Activated CD8-positive, alpha-beta T cell treated with anti-CD3 and anti-CD28 coated beads, Interleukin-2, amount 10 ng/mL, durations not matched to agents 7 days and 5 days (primary cell): ENCODE measurements at regions of chr6 and their contacts with region 1.

Region 1: GRCh38 chr6:106608062-106608668 is 21.1 kb downstream of the RTN4IP1 start:
- DNase-seq: peak; percentile 55
- ATAC-seq: peak; percentile 77
- H3K4me3 Mint-ChIP-seq: no peak overlapping the region
- H3K27ac Mint-ChIP-seq: no peak overlapping the region
- H3K4me1 Mint-ChIP-seq: peaks cover 12% of the 10 kb centered on the region
- H3K27me3 Mint-ChIP-seq: no peaks in the 10 kb centered on the region

Region 2: GRCh38 chr6:106620931-106621672 is 12.9 kb after region 1 on chr6:
- CTCF ChIA-PET with region 1: interaction called, 50 read pairs
- POLR2A ChIA-PET with region 1: no interaction called
- DNase-seq: no peak
- ATAC-seq: no peak
- H3K4me3 Mint-ChIP-seq: no peak overlapping the region
- H3K27ac Mint-ChIP-seq: no peak overlapping the region
- H3K4me1 Mint-ChIP-seq: peaks cover 16% of the 10 kb centered on the region
- H3K27me3 Mint-ChIP-seq: no peaks in the 10 kb centered on the region

Region 3: DNA sequence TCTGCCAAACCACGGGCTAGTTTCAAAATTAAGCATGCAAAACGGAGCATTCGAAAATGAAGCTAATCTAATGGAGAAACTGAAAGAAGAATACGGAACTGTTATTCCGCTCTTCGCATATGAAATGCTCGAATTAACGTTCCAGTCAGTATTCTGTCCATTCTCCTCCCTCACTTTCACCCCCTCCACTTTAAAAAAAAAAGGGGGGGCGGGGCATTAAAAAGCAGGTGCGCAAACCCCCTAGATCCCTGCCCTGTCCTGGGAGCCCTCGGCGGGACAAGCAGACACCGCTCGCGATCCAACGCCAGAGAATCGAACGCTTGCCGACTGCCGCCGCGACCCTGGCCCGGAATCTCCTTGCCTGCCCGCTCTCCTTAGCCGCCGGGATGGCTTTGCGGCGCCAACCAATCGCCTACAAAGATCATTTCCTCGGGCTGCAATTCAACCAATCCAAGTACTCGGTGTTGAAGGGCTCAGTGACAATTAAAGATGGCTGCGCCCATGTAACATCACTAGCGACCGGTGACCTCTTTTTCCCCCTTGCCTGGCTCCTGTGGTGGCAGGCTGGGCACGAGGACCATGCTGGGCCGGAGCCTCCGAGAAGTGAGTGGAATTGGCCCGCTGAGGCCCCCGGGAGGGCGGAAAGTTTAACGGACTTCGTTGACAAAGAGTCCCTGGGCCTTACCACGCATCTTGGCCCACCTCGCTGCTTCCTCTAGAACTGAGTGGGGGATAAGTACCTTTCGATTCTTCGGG is 21.1 kb after region 1 on chr6 and contains the starts of genes QRSL1 and RTN4IP1:
- CTCF ChIA-PET with region 1: interaction called, 50 read pairs
- POLR2A ChIA-PET with region 1: interaction called, 3 read pairs
- DNase-seq: peak; percentile 92
- ATAC-seq: peak; percentile 96
- H3K4me3 Mint-ChIP-seq: peak within 1 kb of the TSS; percentile 91
- H3K27ac Mint-ChIP-seq: peak within 1 kb of the TSS; percentile 95
- H3K4me1 Mint-ChIP-seq: peaks cover 34% of the 10 kb centered on the region
- H3K27me3 Mint-ChIP-seq: no peaks in the 10 kb centered on the region
- total RNA-seq, gene QRSL1: 12.3 to 14.2 TPM
- total RNA-seq, gene RTN4IP1: 7.4 to 8.7 TPM

Region 4: GRCh38 chr6:106634565-106634964 is 26.4 kb after region 1 on chr6:
- CTCF ChIA-PET with region 1: interaction called, 10 read pairs
- POLR2A ChIA-PET with region 1: no interaction called
- DNase-seq: no peak
- ATAC-seq: no peak
- H3K4me3 Mint-ChIP-seq: no peak overlapping the region
- H3K27ac Mint-ChIP-seq: no peak overlapping the region
- H3K4me1 Mint-ChIP-seq: peaks cover 35% of the 10 kb centered on the region
- H3K27me3 Mint-ChIP-seq: no peaks in the 10 kb centered on the region